ENCODE measurements at regions of chr15 and their contacts with region 1.

Region 1: DNA sequence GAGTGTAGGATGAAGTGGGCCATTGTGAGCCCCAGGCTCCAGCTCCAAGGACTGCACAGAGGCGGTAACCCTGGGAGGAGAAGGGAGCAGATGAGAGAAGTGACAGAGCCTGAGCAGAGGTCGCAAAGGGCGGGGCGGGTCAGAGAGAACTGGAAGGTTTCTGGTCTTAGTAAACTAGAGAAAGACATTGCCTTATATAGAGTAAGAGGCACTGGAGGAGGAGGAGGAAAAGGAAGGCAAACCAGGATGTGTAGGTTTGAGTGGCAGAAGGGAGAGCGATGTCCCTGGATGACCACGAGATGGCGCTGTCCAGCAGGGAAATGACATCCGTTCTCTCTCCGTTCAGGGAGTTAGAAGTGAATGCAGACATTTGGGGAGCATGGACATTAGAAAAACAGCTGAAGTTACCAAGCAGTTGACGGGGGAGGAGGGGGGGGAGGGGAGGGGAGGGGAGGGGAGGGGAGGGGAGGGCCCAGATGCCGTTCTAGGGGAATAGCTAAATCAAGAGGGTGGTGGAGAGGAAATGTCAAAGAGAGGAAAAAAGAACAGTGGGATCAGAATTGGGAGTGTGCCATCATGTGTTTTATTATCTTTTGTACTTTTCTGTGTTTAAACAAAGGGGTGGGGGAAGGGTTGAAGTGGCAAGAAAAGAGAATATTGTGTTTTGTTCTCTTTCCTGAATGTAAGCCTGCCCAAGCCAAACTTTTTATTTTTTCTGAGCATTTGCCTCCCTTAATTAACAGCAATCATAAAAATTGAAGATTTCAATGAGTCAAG is 48.8 kb downstream of the STARD5 start:
- DNase-seq: peak; percentile 89
- H3K4me3 Mint-ChIP-seq: peak overlapping the region; percentile 3
- H3K27ac Mint-ChIP-seq: peak overlapping the region; percentile 23
- H3K4me1 Mint-ChIP-seq: peaks cover 22% of the 10 kb centered on the region
- H3K27me3 Mint-ChIP-seq: no peaks in the 10 kb centered on the region

Region 2: DNA sequence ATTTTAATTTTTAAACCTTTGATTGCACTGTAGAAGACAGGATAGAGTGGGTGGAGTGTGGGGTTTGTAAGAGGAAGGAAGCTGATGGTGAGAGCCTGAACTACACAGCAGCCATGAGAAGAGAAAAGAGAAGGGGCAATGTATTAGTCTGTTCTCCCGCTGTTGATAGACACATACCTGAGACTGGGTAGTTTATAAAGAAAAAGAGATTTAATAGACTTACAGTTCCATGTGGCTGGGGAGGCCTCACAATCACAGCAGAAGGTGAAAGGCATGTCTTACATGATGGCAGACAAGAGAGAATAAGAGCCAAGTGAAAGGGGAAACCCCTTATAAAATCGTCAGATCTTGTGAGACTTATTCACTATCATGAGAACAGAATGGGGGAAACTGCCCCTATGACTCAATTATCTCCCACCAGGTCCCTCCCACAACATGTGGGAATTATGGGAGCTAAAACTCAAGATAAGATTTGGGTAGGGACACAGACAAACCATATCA is 11.6 kb after region 1 on chr15:
- CTCF ChIA-PET with region 1: interaction called, 45 read pairs
- POLR2A ChIA-PET with region 1: interaction called, 3 read pairs
- intact Hi-C with region 1: no loop called
- DNase-seq: no peak
- H3K4me3 Mint-ChIP-seq: peak overlapping the region; percentile 58
- H3K27ac Mint-ChIP-seq: peak overlapping the region; percentile 88
- H3K4me1 Mint-ChIP-seq: peaks cover 68% of the 10 kb centered on the region
- H3K27me3 Mint-ChIP-seq: no peaks in the 10 kb centered on the region

Region 3: GRCh38 chr15:81311752-81312464 is 36.8 kb after region 1 on chr15:
- CTCF ChIA-PET with region 1: interaction called, 11 read pairs
- POLR2A ChIA-PET with region 1: interaction called, 3 read pairs
- intact Hi-C with region 1: no loop called
- DNase-seq: no peak
- H3K4me3 Mint-ChIP-seq: no peak overlapping the region
- H3K27ac Mint-ChIP-seq: peak overlapping the region; percentile 14
- H3K4me1 Mint-ChIP-seq: peaks cover 59% of the 10 kb centered on the region
- H3K27me3 Mint-ChIP-seq: no peaks in the 10 kb centered on the region

Region 4: GRCh38 chr15:81330366-81331090 is 55.4 kb after region 1 on chr15:
- CTCF ChIA-PET with region 1: interaction called, 65 read pairs
- POLR2A ChIA-PET with region 1: no interaction called
- intact Hi-C with region 1: loop called (anchors 1 kb)
- DNase-seq: no peak
- H3K4me3 Mint-ChIP-seq: no peak overlapping the region
- H3K27ac Mint-ChIP-seq: no peak overlapping the region
- H3K4me1 Mint-ChIP-seq: no peaks in the 10 kb centered on the region
- H3K27me3 Mint-ChIP-seq: no peaks in the 10 kb centered on the region

Region 5: GRCh38 chr15:81394603-81395002 is 119.5 kb after region 1 on chr15:
- CTCF ChIA-PET with region 1: interaction called, 121 read pairs
- POLR2A ChIA-PET with region 1: no interaction called
- intact Hi-C with region 1: no loop called
- DNase-seq: no peak
- H3K4me3 Mint-ChIP-seq: no peak overlapping the region
- H3K27ac Mint-ChIP-seq: no peak overlapping the region
- H3K4me1 Mint-ChIP-seq: no peaks in the 10 kb centered on the region
- H3K27me3 Mint-ChIP-seq: no peaks in the 10 kb centered on the region

Region 6: DNA sequence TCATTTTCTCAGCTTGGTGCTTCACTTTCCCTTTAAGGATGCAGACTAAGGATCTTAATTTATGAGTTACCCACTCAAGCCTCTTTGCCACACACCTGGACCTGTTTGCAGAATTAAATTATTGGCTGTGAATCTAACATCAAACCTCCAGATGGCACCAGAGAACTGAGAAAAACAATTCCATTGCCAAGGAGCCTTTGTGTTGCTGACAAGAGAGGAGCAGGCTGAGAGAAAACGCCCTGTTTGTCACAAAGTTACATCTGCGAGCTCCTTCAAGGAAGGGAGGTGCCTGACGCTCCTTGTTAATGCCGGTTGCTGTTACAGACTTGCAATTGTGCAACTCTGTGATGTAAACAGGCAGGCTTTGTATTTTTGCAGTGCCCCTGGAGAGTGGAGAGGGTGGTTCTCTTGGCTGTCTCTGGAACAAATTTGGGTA is 135.2 kb after region 1 on chr15:
- CTCF ChIA-PET with region 1: interaction called, 10 read pairs
- POLR2A ChIA-PET with region 1: no interaction called
- intact Hi-C with region 1: no loop called
- DNase-seq: peak; percentile 11
- H3K4me3 Mint-ChIP-seq: no peak overlapping the region
- H3K27ac Mint-ChIP-seq: no peak overlapping the region
- H3K4me1 Mint-ChIP-seq: peaks cover 9% of the 10 kb centered on the region
- H3K27me3 Mint-ChIP-seq: peaks cover 20% of the 10 kb centered on the region

Measured in activated CD4-positive, alpha-beta memory T cell treated with anti-CD3 and anti-CD28 coated beads for 36 hours (primary cell).